GM12878 (cell line): ENCODE measurements at regions of chr3 and their contacts with region 1.

Region 1: DNA sequence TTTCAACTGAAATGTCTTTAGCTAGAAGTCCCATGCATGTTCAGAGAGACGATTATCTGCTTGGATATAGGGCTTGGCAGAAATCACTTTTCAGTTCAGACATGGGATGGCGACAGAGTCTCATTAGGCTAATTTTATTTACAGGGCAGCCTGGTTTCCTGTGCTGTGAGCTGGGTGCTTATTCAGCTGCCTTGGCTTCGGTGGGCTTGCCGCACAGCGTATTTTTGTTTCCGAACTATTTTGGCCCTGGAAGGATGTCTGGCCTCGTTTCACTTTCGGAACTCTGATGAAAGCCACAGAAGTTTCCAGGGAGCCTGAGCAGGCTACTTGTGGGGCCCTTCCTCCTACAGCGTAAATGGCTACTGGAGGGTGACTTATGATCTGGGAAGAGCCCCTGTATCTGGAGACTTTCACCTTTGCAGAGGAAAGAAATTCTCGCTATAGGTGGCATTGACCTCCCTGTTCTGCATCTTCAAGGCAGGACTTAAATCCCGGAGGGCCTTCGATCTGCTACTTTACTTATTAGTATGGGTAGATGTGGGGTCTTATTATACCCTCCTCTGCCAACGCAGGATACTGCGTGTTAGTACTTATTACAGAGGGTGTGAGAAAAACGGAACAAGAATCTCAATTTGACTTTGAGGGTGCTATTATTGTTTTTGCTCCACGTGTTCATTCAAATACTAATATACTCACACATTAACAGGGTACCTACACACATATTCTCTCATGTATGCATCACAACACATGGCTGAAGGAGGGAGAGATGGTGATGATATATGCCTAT is 364.0 kb upstream of the RBMS3 start:
- DNase-seq: peak; percentile 61
- ATAC-seq: peak; percentile 95
- H3K4me3 ChIP-seq: no peak overlapping the region
- H3K27ac ChIP-seq: no peak overlapping the region
- H3K4me1 ChIP-seq: peaks cover 20% of the 10 kb centered on the region
- H3K27me3 ChIP-seq: no peaks in the 10 kb centered on the region
- CTCF ChIP-seq: peak; percentile 61 to 78 (median 66)
- EP300 ChIP-seq: no peak
- POLR2A ChIP-seq: no peak
- RAD21 ChIP-seq: peak; percentile 91

Region 2: DNA sequence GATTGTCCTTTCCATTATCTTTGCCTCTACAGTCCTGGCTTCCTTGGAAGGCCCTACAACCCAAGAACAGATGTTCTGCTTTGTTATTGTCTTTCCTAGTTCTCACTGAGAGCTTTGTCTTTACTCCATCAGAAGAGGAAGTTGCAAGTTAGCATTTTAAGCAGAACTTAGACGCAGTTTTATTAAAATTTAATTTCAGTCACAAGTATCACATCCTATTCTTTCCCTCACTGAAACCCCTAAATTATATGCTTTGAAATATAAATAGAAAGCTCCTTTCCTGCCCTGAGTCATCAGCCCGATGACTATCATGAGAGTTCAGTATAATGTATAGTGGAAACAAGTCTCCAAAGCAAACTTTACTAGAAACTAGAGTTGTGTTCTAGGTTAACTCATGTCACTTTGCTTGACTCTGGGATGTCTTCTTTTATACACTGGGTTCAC is 72.8 kb after region 1 on chr3:
- CTCF ChIA-PET with region 1: no interaction called
- POLR2A ChIA-PET with region 1: no interaction called
- RAD21 ChIA-PET with region 1: no interaction called
- SMC1A ChIA-PET with region 1: no interaction called
- in situ Hi-C with region 1: no loop called
- intact Hi-C with region 1: loop called (anchors 2 kb)
- DNase-seq: peak; percentile 32
- ATAC-seq: peak; percentile 95
- H3K4me3 ChIP-seq: no peak overlapping the region
- H3K27ac ChIP-seq: no peak overlapping the region
- H3K4me1 ChIP-seq: peaks cover 13% of the 10 kb centered on the region; the same call in 1 of the 2 replicates
- H3K27me3 ChIP-seq: no peaks in the 10 kb centered on the region
- CTCF ChIP-seq: no peak
- EP300 ChIP-seq: peak in 1 of 2 experiments; percentile 28; a peak in 1 of 4 replicates
- POLR2A ChIP-seq: no peak
- RAD21 ChIP-seq: no peak

Region 3: DNA sequence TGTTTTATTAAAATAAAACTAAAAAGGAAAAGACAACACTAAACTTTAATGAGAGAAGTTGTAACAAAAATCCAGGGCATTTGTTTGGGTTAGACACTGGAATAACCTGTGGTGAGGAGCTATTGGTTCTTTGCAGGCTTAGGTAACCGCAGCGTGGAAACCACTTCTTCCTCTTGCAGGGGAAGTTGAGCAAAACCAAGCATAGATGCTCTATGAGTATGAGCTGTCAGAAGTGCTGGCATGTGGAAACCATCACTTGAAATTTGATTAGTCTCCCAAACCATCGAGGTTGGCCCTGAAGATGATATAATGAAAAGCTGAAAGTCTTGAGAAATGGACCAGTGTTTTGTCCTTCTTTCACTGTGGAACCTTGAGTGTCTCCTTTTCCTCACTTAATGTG is 236.9 kb after region 1 on chr3:
- CTCF ChIA-PET with region 1: no interaction called
- POLR2A ChIA-PET with region 1: no interaction called
- RAD21 ChIA-PET with region 1: no interaction called
- SMC1A ChIA-PET with region 1: interaction called, 3 read pairs
- in situ Hi-C with region 1: no loop called
- intact Hi-C with region 1: loop called (anchors 5 kb)
- DNase-seq: peak; percentile 15
- ATAC-seq: peak; percentile 50
- H3K4me3 ChIP-seq: no peak overlapping the region
- H3K27ac ChIP-seq: no peak overlapping the region
- H3K4me1 ChIP-seq: no peaks in the 10 kb centered on the region
- H3K27me3 ChIP-seq: no peaks in the 10 kb centered on the region
- CTCF ChIP-seq: no peak
- EP300 ChIP-seq: no peak
- POLR2A ChIP-seq: no peak
- RAD21 ChIP-seq: no peak

Region 4: DNA sequence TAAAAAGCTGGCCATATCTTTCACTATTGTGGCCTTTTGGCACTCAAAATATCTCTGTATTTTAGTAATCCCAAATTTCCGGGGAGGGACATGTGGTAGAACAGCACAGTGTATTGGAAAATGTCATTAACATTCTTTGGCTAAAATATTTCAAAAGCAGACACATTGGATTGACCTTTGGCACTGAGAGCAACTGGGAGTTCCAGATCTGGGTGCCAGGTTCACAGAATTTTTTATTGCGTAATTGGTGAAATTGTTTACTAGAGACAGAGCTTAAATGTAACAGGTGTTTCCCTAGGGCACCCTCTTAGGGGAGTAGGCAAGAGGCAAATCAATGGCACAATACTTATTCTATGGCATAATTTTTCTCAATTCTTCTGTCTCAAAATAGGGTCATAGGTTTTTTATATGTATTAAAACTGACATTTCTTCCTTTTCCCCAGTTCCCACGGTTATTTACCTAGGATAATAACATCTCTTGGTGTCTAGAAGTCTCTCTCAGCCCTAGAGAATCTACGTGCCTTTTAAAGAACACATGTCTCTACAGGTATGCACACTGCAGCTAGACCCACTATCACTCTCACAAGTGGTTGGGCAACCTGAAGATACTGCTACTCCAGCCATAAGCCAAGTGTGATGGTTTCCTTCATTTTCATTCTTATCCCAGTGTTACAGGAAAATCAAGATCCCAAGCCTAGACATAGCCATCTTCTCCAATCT is 374.5 kb after region 1 on chr3:
- CTCF ChIA-PET with region 1: no interaction called
- POLR2A ChIA-PET with region 1: no interaction called
- RAD21 ChIA-PET with region 1: no interaction called
- SMC1A ChIA-PET with region 1: no interaction called
- in situ Hi-C with region 1: no loop called
- intact Hi-C with region 1: no loop called
- DNase-seq: no peak
- ATAC-seq: no peak
- H3K4me3 ChIP-seq: no peak overlapping the region
- H3K27ac ChIP-seq: no peak overlapping the region
- H3K4me1 ChIP-seq: no peaks in the 10 kb centered on the region
- H3K27me3 ChIP-seq: no peaks in the 10 kb centered on the region
- CTCF ChIP-seq: no peak
- EP300 ChIP-seq: no peak
- POLR2A ChIP-seq: no peak
- RAD21 ChIP-seq: no peak

Region 5: DNA sequence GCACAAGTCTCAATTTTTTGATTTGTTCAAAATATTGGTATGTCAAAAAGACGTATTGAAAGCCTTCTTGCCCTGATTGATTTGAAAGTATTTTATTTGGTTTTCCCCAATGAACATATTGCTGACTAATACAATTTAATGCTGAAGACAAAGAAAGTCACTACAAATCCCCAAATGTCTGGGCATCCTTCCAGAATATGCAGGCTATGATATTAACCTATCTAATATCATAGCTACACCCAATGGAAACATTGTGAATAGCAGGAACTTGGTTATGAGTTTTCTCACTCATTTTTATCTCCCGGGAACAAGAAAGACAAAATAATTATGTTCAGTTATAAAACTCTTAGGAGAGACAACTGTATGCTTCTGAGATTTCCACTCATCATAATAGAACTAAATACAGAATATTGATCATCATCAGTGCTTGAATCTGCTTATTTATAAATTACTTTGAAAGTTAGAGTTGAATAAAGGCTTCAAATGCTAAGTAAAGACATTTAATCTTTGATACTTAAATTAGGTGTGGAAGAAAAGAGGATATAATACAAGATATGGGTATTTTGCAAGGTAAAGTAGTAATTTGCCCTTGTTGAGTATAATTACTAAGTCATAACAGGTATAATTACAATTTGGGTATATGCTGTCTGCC is 847.8 kb after region 1 on chr3:
- CTCF ChIA-PET with region 1: interaction called, 10 read pairs
- POLR2A ChIA-PET with region 1: no interaction called
- RAD21 ChIA-PET with region 1: interaction called, 11 read pairs
- SMC1A ChIA-PET with region 1: interaction called, 6 read pairs
- in situ Hi-C with region 1: no loop called
- intact Hi-C with region 1: loop called (anchors 2 kb)
- DNase-seq: no peak
- ATAC-seq: peak; percentile 47; the same call in 1 of the 3 replicates
- H3K4me3 ChIP-seq: no peak overlapping the region
- H3K27ac ChIP-seq: no peak overlapping the region
- H3K4me1 ChIP-seq: no peaks in the 10 kb centered on the region
- H3K27me3 ChIP-seq: no peaks in the 10 kb centered on the region
- CTCF ChIP-seq: peak; percentile 25 to 62 (median 41); a peak in 5 of 6 replicates
- EP300 ChIP-seq: no peak
- POLR2A ChIP-seq: no peak
- RAD21 ChIP-seq: peak; percentile 76

Region 6: GRCh38 chr3:30012941-30013543 is 1096.1 kb after region 1 on chr3:
- CTCF ChIA-PET with region 1: interaction called, 4 read pairs
- POLR2A ChIA-PET with region 1: no interaction called
- RAD21 ChIA-PET with region 1: interaction called, 3 read pairs
- SMC1A ChIA-PET with region 1: interaction called, 3 read pairs
- in situ Hi-C with region 1: no loop called
- intact Hi-C with region 1: loop called (anchors 2 kb)
- DNase-seq: peak; percentile 8
- ATAC-seq: peak; percentile 69
- H3K4me3 ChIP-seq: no peak overlapping the region
- H3K27ac ChIP-seq: no peak overlapping the region
- H3K4me1 ChIP-seq: no peaks in the 10 kb centered on the region
- H3K27me3 ChIP-seq: no peaks in the 10 kb centered on the region
- CTCF ChIP-seq: peak; percentile 48 to 61 (median 48)
- EP300 ChIP-seq: no peak
- POLR2A ChIP-seq: no peak
- RAD21 ChIP-seq: peak; percentile 54